ENCODE measurements at regions of chr5 and their contacts with region 1.

Region 1: GRCh38 chr5:146662229-146662628 is 146.2 kb upstream of the GPR151 start:
- DNase-seq: peak in 4 of 9 experiments; percentile 1 to 68 (median 36)
- ATAC-seq: no peak
- H3K4me3 ChIP-seq: no peak overlapping the region
- H3K4me3 Mint-ChIP-seq: no peak overlapping the region
- H3K27ac ChIP-seq: no peak overlapping the region
- H3K27ac Mint-ChIP-seq: no peak overlapping the region
- H3K4me1 ChIP-seq: no peaks in the 10 kb centered on the region
- H3K4me1 Mint-ChIP-seq: peaks cover 10% of the 10 kb centered on the region
- H3K27me3 ChIP-seq: no peaks in the 10 kb centered on the region
- H3K27me3 Mint-ChIP-seq: no peaks in the 10 kb centered on the region
- CTCF ChIP-seq: peak; percentile 66

Region 2: GRCh38 chr5:145124806-145125205 is 1537.4 kb before region 1 on chr5:
- CTCF ChIA-PET with region 1: no interaction called
- POLR2A ChIA-PET with region 1: no interaction called
- intact Hi-C with region 1: no loop called
- DNase-seq: no peak
- ATAC-seq: no peak
- H3K4me3 ChIP-seq: no peak overlapping the region
- H3K4me3 Mint-ChIP-seq: no peak overlapping the region
- H3K27ac ChIP-seq: no peak overlapping the region
- H3K27ac Mint-ChIP-seq: no peak overlapping the region
- H3K4me1 ChIP-seq: no peaks in the 10 kb centered on the region
- H3K4me1 Mint-ChIP-seq: no peaks in the 10 kb centered on the region
- H3K27me3 ChIP-seq: no peaks in the 10 kb centered on the region
- H3K27me3 Mint-ChIP-seq: no peaks in the 10 kb centered on the region
- CTCF ChIP-seq: no peak

Region 3: GRCh38 chr5:146541958-146542849 is 120.0 kb before region 1 on chr5:
- CTCF ChIA-PET with region 1: interaction called, 5 read pairs
- POLR2A ChIA-PET with region 1: no interaction called
- intact Hi-C with region 1: loop called in 1 of 2 experiments (anchors 5 kb)
- DNase-seq: peak; percentile 46 to 80 (median 67)
- ATAC-seq: peak; percentile 85
- H3K4me3 ChIP-seq: no peak overlapping the region
- H3K4me3 Mint-ChIP-seq: no peak overlapping the region
- H3K27ac ChIP-seq: no peak overlapping the region
- H3K27ac Mint-ChIP-seq: no peak overlapping the region
- H3K4me1 ChIP-seq: no peaks in the 10 kb centered on the region
- H3K4me1 Mint-ChIP-seq: no peaks in the 10 kb centered on the region
- H3K27me3 ChIP-seq: no peaks in the 10 kb centered on the region
- H3K27me3 Mint-ChIP-seq: no peaks in the 10 kb centered on the region
- CTCF ChIP-seq: peak; percentile 95

Region 4: DNA sequence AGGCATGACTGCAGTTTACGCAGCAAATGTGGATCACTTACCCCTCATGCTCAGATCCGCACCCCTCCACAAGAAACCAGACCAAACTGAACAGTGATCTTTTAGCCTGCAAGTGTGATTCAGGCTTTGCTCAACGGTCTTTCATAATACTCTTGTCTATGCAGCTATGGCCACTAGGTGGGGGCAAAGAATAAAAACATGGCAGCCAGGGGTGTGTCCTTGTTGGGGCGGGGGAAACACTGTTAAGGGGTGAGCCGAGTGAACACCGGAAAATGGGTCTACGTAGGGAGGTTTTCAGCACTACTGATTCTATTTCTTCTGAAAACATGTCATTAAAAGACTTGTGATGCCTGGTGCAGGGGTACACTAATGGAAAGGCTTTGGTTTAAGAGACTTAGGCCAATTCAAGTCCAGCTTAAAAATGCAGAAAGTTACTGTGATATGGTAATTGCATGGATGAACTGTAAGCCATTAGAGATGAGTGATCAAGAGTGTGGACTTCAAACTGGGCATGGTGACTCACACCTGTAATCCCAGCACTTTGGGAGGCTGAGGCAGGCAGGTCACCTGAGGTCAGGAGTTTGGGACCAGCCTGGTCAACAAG is 96.4 kb before region 1 on chr5:
- CTCF ChIA-PET with region 1: no interaction called
- POLR2A ChIA-PET with region 1: no interaction called
- intact Hi-C with region 1: loop called in 1 of 2 experiments (anchors 10 kb)
- DNase-seq: peak; percentile 8 to 76 (median 51)
- ATAC-seq: peak; percentile 100
- H3K4me3 ChIP-seq: no peak overlapping the region
- H3K4me3 Mint-ChIP-seq: no peak overlapping the region
- H3K27ac ChIP-seq: no peak overlapping the region
- H3K27ac Mint-ChIP-seq: no peak overlapping the region
- H3K4me1 ChIP-seq: no peaks in the 10 kb centered on the region
- H3K4me1 Mint-ChIP-seq: peaks cover 5% of the 10 kb centered on the region
- H3K27me3 ChIP-seq: no peaks in the 10 kb centered on the region
- H3K27me3 Mint-ChIP-seq: no peaks in the 10 kb centered on the region
- CTCF ChIP-seq: no peak

Region 5: GRCh38 chr5:146878476-146879172 is 216.4 kb after region 1 on chr5 and contains the start of gene PPP2R2B:
- CTCF ChIA-PET with region 1: interaction called, 5 read pairs
- POLR2A ChIA-PET with region 1: no interaction called
- intact Hi-C with region 1: loop called in 1 of 2 experiments (anchors 10 kb)
- DNase-seq: peak in 8 of 9 experiments; percentile 1 to 77 (median 60)
- ATAC-seq: peak; percentile 80
- H3K4me3 ChIP-seq: peak within 1 kb of the TSS; percentile 73 to 77
- H3K4me3 Mint-ChIP-seq: peak within 1 kb of the TSS; percentile 91
- H3K27ac ChIP-seq: peak within 1 kb of the TSS in 1 of 2 experiments; percentile 53
- H3K27ac Mint-ChIP-seq: peak within 1 kb of the TSS; percentile 64
- H3K4me1 ChIP-seq: peaks cover 13% of the 10 kb centered on the region
- H3K4me1 Mint-ChIP-seq: peaks cover 27% of the 10 kb centered on the region
- H3K27me3 ChIP-seq: no peaks in the 10 kb centered on the region
- H3K27me3 Mint-ChIP-seq: peaks cover 17% of the 10 kb centered on the region
- CTCF ChIP-seq: no peak
- total RNA-seq, gene PPP2R2B: 4.7 to 7.0 TPM

Region 6: GRCh38 chr5:146947181-146947941 is 285.1 kb after region 1 on chr5:
- CTCF ChIA-PET with region 1: interaction called, 3 read pairs
- POLR2A ChIA-PET with region 1: no interaction called
- intact Hi-C with region 1: loop called in 1 of 2 experiments (anchors 1 kb)
- DNase-seq: peak in 3 of 9 experiments; percentile 6 to 54 (median 43)
- ATAC-seq: no peak
- H3K4me3 ChIP-seq: no peak overlapping the region
- H3K4me3 Mint-ChIP-seq: no peak overlapping the region
- H3K27ac ChIP-seq: no peak overlapping the region
- H3K27ac Mint-ChIP-seq: no peak overlapping the region
- H3K4me1 ChIP-seq: no peaks in the 10 kb centered on the region
- H3K4me1 Mint-ChIP-seq: peaks cover 6% of the 10 kb centered on the region
- H3K27me3 ChIP-seq: no peaks in the 10 kb centered on the region
- H3K27me3 Mint-ChIP-seq: peaks cover 6% of the 10 kb centered on the region
- CTCF ChIP-seq: no peak

Region 7: GRCh38 chr5:147188200-147189108 is 526.2 kb after region 1 on chr5:
- CTCF ChIA-PET with region 1: interaction called, 3 read pairs
- POLR2A ChIA-PET with region 1: no interaction called
- intact Hi-C with region 1: loop called in 1 of 2 experiments (anchors 2 kb)
- DNase-seq: peak in 7 of 9 experiments; percentile 2 to 73 (median 33)
- ATAC-seq: peak; percentile 59
- H3K4me3 ChIP-seq: no peak overlapping the region
- H3K4me3 Mint-ChIP-seq: no peak overlapping the region
- H3K27ac ChIP-seq: no peak overlapping the region
- H3K27ac Mint-ChIP-seq: no peak overlapping the region
- H3K4me1 ChIP-seq: no peaks in the 10 kb centered on the region
- H3K4me1 Mint-ChIP-seq: peaks cover 6% of the 10 kb centered on the region
- H3K27me3 ChIP-seq: no peaks in the 10 kb centered on the region
- H3K27me3 Mint-ChIP-seq: peaks cover 10% of the 10 kb centered on the region
- CTCF ChIP-seq: peak; percentile 85